ENCODE measurements at regions of chr16 and their contacts with region 1.

Region 1: GRCh38 chr16:30335598-30336474 is 19.3 kb downstream of the CD2BP2 start:
- DNase-seq: peak; percentile 39
- H3K4me3 Mint-ChIP-seq: peak overlapping the region; percentile 89
- H3K27ac Mint-ChIP-seq: peak overlapping the region; percentile 63
- H3K4me1 Mint-ChIP-seq: peaks cover 20% of the 10 kb centered on the region
- H3K27me3 Mint-ChIP-seq: no peaks in the 10 kb centered on the region

Region 2: GRCh38 chr16:30355144-30355894 is 19.5 kb after region 1 on chr16 and contains the start of gene CD2BP2:
- CTCF ChIA-PET with region 1: no interaction called
- POLR2A ChIA-PET with region 1: interaction called, 20 read pairs
- DNase-seq: peak; percentile 88
- H3K4me3 Mint-ChIP-seq: peak within 1 kb of the TSS; percentile 90
- H3K27ac Mint-ChIP-seq: peak within 1 kb of the TSS; percentile 93
- H3K4me1 Mint-ChIP-seq: peaks cover 66% of the 10 kb centered on the region
- H3K27me3 Mint-ChIP-seq: no peaks in the 10 kb centered on the region
- total RNA-seq, gene CD2BP2: 75.6 to 75.9 TPM

Region 3: GRCh38 chr16:30472328-30472942 is 136.6 kb after region 1 on chr16 and contains the start of gene ITGAL:
- CTCF ChIA-PET with region 1: no interaction called
- POLR2A ChIA-PET with region 1: no interaction called
- DNase-seq: peak; percentile 92
- H3K4me3 Mint-ChIP-seq: peak within 1 kb of the TSS; percentile 98
- H3K27ac Mint-ChIP-seq: peak within 1 kb of the TSS; percentile 96
- H3K4me1 Mint-ChIP-seq: peaks cover 58% of the 10 kb centered on the region
- H3K27me3 Mint-ChIP-seq: no peaks in the 10 kb centered on the region
- total RNA-seq, gene ITGAL: 583 to 586 TPM

Region 4: GRCh38 chr16:30922960-30923535 is 587.2 kb after region 1 on chr16:
- CTCF ChIA-PET with region 1: no interaction called
- POLR2A ChIA-PET with region 1: no interaction called
- DNase-seq: peak; percentile 98
- H3K4me3 Mint-ChIP-seq: peak overlapping the region; percentile 98
- H3K27ac Mint-ChIP-seq: peak overlapping the region; percentile 98
- H3K4me1 Mint-ChIP-seq: peaks cover 25% of the 10 kb centered on the region
- H3K27me3 Mint-ChIP-seq: no peaks in the 10 kb centered on the region